GM12878 (cell line): ENCODE measurements at regions of chr10 and their contacts with region 1.

Region 1: GRCh38 chr10:84537447-84537931 is 209.1 kb downstream of the CCSER2 start:
- DNase-seq: no peak
- ATAC-seq: peak; percentile 86
- H3K4me3 ChIP-seq: no peak overlapping the region
- H3K27ac ChIP-seq: no peak overlapping the region
- H3K4me1 ChIP-seq: no peaks in the 10 kb centered on the region
- H3K27me3 ChIP-seq: no peaks in the 10 kb centered on the region; a peak in 1 of 4 replicates
- CTCF ChIP-seq: peak; percentile 57 to 89 (median 66); a peak in 5 of 6 replicates
- EP300 ChIP-seq: no peak
- POLR2A ChIP-seq: no peak
- RAD21 ChIP-seq: peak; percentile 80

Region 2: GRCh38 chr10:84156768-84157167 is 380.7 kb before region 1 on chr10:
- CTCF ChIA-PET with region 1: no interaction called
- POLR2A ChIA-PET with region 1: no interaction called
- RAD21 ChIA-PET with region 1: no interaction called
- SMC1A ChIA-PET with region 1: no interaction called
- in situ Hi-C with region 1: no loop called
- intact Hi-C with region 1: loop called (anchors 10 kb)
- DNase-seq: no peak
- ATAC-seq: peak; percentile 46
- H3K4me3 ChIP-seq: no peak overlapping the region
- H3K27ac ChIP-seq: no peak overlapping the region
- H3K4me1 ChIP-seq: peaks cover 7% of the 10 kb centered on the region
- H3K27me3 ChIP-seq: no peaks in the 10 kb centered on the region
- CTCF ChIP-seq: no peak
- EP300 ChIP-seq: no peak
- POLR2A ChIP-seq: peak; percentile 66
- RAD21 ChIP-seq: no peak

Region 3: GRCh38 chr10:84269773-84270172 is 267.7 kb before region 1 on chr10:
- CTCF ChIA-PET with region 1: interaction called, 228 read pairs
- POLR2A ChIA-PET with region 1: no interaction called
- RAD21 ChIA-PET with region 1: interaction called, 74 read pairs
- SMC1A ChIA-PET with region 1: interaction called, 60 read pairs
- in situ Hi-C with region 1: loop called (anchors 5 kb)
- intact Hi-C with region 1: loop called (anchors 1 kb)
- DNase-seq: no peak
- ATAC-seq: no peak
- H3K4me3 ChIP-seq: no peak overlapping the region
- H3K27ac ChIP-seq: no peak overlapping the region
- H3K4me1 ChIP-seq: no peaks in the 10 kb centered on the region
- H3K27me3 ChIP-seq: peaks cover 0 to 2% of the 10 kb centered on the region in 2 experiments; a peak in 2 of 4 replicates
- CTCF ChIP-seq: no peak
- EP300 ChIP-seq: no peak
- POLR2A ChIP-seq: no peak
- RAD21 ChIP-seq: no peak

Region 4: GRCh38 chr10:84352251-84352842 is 185.1 kb before region 1 on chr10:
- CTCF ChIA-PET with region 1: interaction called, 71 read pairs
- POLR2A ChIA-PET with region 1: no interaction called
- RAD21 ChIA-PET with region 1: interaction called, 16 read pairs
- SMC1A ChIA-PET with region 1: interaction called, 9 read pairs
- in situ Hi-C with region 1: no loop called
- intact Hi-C with region 1: loop called (anchors 1 kb)
- DNase-seq: no peak
- ATAC-seq: peak; percentile 99
- H3K4me3 ChIP-seq: no peak overlapping the region
- H3K27ac ChIP-seq: no peak overlapping the region
- H3K4me1 ChIP-seq: no peaks in the 10 kb centered on the region
- H3K27me3 ChIP-seq: no peaks in the 10 kb centered on the region
- CTCF ChIP-seq: peak; percentile 81 to 90 (median 87)
- EP300 ChIP-seq: no peak
- POLR2A ChIP-seq: no peak
- RAD21 ChIP-seq: peak; percentile 83

Region 5: DNA sequence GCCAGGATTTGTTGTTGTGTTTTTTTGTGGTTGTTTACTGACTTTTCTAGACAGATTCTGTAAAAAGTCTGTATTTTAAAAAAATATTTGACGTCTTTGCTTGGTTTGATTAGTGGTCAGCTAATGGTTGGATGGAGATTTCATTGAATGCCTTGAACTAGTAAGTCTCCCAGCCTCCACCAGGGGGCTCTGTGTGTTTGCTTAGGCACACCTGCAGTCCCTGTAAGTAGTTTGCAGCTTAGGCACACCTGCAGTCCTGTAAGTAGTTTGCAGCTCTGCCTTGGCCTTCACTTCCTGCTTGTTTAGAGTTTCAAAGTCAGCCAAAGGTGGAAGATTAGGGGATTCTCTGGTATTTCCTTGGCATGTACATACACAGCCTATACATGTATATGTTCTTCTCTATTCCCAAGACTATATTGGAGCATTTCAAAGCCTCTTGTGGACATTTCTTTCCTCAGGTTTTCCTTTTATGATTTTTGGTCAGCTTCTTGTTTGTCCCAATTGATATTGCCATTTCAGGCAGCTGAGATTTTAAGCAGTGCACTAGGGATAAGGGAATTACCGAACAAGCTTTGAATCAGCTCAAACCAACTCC is 107.5 kb before region 1 on chr10:
- CTCF ChIA-PET with region 1: interaction called, 109 read pairs
- POLR2A ChIA-PET with region 1: no interaction called
- RAD21 ChIA-PET with region 1: interaction called, 41 read pairs
- SMC1A ChIA-PET with region 1: interaction called, 72 read pairs
- in situ Hi-C with region 1: no loop called
- intact Hi-C with region 1: loop called (anchors 1 kb)
- DNase-seq: peak; percentile 31
- ATAC-seq: peak; percentile 99
- H3K4me3 ChIP-seq: no peak overlapping the region
- H3K27ac ChIP-seq: no peak overlapping the region
- H3K4me1 ChIP-seq: no peaks in the 10 kb centered on the region
- H3K27me3 ChIP-seq: no peaks in the 10 kb centered on the region
- CTCF ChIP-seq: peak; percentile 73 to 88 (median 77)
- EP300 ChIP-seq: no peak
- POLR2A ChIP-seq: no peak
- RAD21 ChIP-seq: peak; percentile 54

Region 6: DNA sequence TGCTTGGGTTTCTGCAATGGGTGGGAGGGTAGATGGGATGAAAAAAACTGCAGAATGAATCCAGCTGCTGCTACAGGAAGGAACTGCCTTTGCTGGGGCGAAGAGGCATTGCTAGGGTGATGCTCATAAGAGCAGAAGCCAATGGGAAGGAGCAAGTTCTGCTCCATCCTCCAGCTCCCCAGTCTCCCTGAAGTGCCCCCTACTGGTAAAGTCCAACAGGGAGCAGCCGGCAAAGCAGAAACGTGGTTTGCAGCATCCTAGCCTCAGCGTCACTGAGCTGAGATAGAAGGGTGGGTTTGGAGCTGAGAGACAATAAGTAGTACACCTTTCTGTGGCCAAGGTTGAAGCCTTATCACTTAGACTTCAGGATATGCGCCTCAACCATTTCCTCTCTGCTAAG is 11.4 kb after region 1 on chr10:
- CTCF ChIA-PET with region 1: interaction called, 24 read pairs
- POLR2A ChIA-PET with region 1: no interaction called
- RAD21 ChIA-PET with region 1: interaction called, 4 read pairs
- SMC1A ChIA-PET with region 1: interaction called, 4 read pairs
- in situ Hi-C with region 1: no loop called
- intact Hi-C with region 1: no loop called
- DNase-seq: no peak
- ATAC-seq: no peak
- H3K4me3 ChIP-seq: no peak overlapping the region
- H3K27ac ChIP-seq: no peak overlapping the region
- H3K4me1 ChIP-seq: no peaks in the 10 kb centered on the region
- H3K27me3 ChIP-seq: peaks cover 0 to 3% of the 10 kb centered on the region in 2 experiments; a peak in 1 of 4 replicates
- CTCF ChIP-seq: peak in 1 of 3 experiments; percentile 23; a peak in 1 of 6 replicates
- EP300 ChIP-seq: no peak
- POLR2A ChIP-seq: no peak
- RAD21 ChIP-seq: no peak

Region 7: GRCh38 chr10:84715911-84716310 is 178.4 kb after region 1 on chr10:
- CTCF ChIA-PET with region 1: interaction called, 14 read pairs
- POLR2A ChIA-PET with region 1: no interaction called
- RAD21 ChIA-PET with region 1: interaction called, 4 read pairs
- SMC1A ChIA-PET with region 1: interaction called, 7 read pairs
- in situ Hi-C with region 1: loop called (anchors 5 kb)
- intact Hi-C with region 1: loop called (anchors 1 kb)
- DNase-seq: no peak
- ATAC-seq: peak; percentile 87
- H3K4me3 ChIP-seq: no peak overlapping the region
- H3K27ac ChIP-seq: no peak overlapping the region
- H3K4me1 ChIP-seq: no peaks in the 10 kb centered on the region
- H3K27me3 ChIP-seq: no peaks in the 10 kb centered on the region; a peak in 1 of 4 replicates
- CTCF ChIP-seq: peak; percentile 59 to 81 (median 77)
- EP300 ChIP-seq: no peak
- POLR2A ChIP-seq: no peak
- RAD21 ChIP-seq: peak; percentile 39

Region 8: GRCh38 chr10:84755311-84755710 is 217.8 kb after region 1 on chr10:
- CTCF ChIA-PET with region 1: no interaction called
- POLR2A ChIA-PET with region 1: no interaction called
- RAD21 ChIA-PET with region 1: no interaction called
- SMC1A ChIA-PET with region 1: no interaction called
- in situ Hi-C with region 1: no loop called
- intact Hi-C with region 1: no loop called
- DNase-seq: no peak
- ATAC-seq: no peak
- H3K4me3 ChIP-seq: no peak overlapping the region
- H3K27ac ChIP-seq: no peak overlapping the region
- H3K4me1 ChIP-seq: no peaks in the 10 kb centered on the region
- H3K27me3 ChIP-seq: 0 out of 4 replicates have a peak, but pooled peaks cover 0 to 1% of the 10 kb centered on the region in 2 experiments
- CTCF ChIP-seq: no peak
- EP300 ChIP-seq: no peak
- POLR2A ChIP-seq: no peak
- RAD21 ChIP-seq: no peak